ENCODE measurements at regions of chr12 and their contacts with region 1.

Region 1: DNA sequence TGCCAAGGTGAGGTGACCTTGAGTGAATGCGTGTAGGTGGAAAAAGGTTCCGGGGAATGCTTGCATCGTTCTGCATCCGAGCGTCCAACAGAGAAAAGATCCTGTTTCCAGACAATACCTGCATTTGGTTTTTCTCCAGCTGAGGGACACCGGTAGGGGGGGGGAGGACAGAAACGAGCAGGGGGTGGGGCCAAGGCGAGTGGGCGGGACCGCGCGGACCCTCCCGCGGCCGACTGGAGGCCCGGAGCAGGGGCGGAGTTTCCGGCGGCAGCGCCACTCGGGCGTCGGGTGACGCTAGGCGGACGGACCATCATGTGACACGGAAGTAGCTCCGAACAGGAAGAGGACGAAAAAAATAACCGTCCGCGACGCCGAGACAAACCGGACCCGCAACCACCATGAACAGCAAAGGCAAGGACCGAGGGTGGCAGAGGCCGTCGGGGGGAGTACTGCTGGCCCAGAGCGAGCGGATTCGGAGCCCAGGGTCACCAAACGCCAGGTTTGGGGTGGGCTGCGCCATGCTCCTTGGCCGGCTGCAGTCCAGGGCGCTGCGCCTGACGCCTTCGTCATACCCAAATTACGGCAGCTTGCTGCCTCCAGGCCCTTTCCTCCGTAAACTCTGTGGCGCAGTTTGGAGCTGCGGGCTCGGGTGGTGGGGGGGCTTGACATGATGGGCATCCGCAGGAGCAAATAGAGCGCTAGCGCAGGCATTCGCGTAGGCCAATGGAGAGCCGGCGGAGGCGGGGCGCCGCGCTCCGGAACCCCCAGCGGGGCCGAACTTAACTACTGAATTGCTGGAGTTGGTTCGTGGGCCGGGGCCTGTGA is at the start of gene DAZAP2:
- DNase-seq: peak; percentile 94
- ATAC-seq: peak; percentile 96
- H3K4me3 ChIP-seq: peak within 1 kb of the TSS; percentile 83
- H3K27ac ChIP-seq: peak within 1 kb of the TSS; percentile 96
- H3K4me1 ChIP-seq: peaks cover 8% of the 10 kb centered on the region
- H3K27me3 ChIP-seq: no peaks in the 10 kb centered on the region
- CTCF ChIP-seq: no peak
- POLR2A ChIP-seq: peak; percentile 95
- RAD21 ChIP-seq: no peak
- total RNA-seq, gene DAZAP2: 62.2 and 77.2 TPM in 2 replicates

Region 2: DNA sequence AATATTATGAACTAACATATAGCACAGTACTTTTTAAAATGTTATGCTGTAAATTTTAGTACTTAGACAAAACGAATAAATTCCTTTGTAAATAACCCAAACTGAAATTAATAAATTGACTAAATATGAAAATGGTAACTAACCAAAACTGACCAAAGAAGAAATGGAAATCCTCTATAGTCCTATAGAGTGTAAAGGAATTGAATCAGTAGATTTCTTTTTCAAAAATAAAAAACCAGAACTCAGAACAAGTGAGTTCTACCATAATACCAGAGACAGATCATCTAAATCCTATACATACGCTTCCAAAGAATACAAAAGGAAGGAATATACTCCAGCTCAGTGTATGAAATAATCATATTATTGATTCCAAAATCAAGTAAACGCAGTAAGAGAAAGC is 356.2 kb before region 1 on chr12:
- CTCF ChIA-PET with region 1: no interaction called
- POLR2A ChIA-PET with region 1: no interaction called
- dilution Hi-C with region 1: no loop called
- in situ Hi-C with region 1: no loop called
- intact Hi-C with region 1: no loop called
- DNase-seq: no peak
- ATAC-seq: no peak
- H3K4me3 ChIP-seq: no peak overlapping the region
- H3K27ac ChIP-seq: no peak overlapping the region
- H3K4me1 ChIP-seq: no peaks in the 10 kb centered on the region
- H3K27me3 ChIP-seq: no peaks in the 10 kb centered on the region
- CTCF ChIP-seq: no peak
- POLR2A ChIP-seq: no peak
- RAD21 ChIP-seq: no peak

Region 3: GRCh38 chr12:51083126-51083833 is 155.4 kb before region 1 on chr12 and contains the start of gene CSRNP2:
- CTCF ChIA-PET with region 1: no interaction called
- POLR2A ChIA-PET with region 1: interaction called, 4 read pairs
- dilution Hi-C with region 1: no loop called
- in situ Hi-C with region 1: no loop called
- intact Hi-C with region 1: loop called (anchors 5 kb)
- DNase-seq: peak; percentile 93
- ATAC-seq: peak; percentile 98
- H3K4me3 ChIP-seq: peak within 1 kb of the TSS; percentile 74
- H3K27ac ChIP-seq: peak within 1 kb of the TSS; percentile 66
- H3K4me1 ChIP-seq: peaks cover 2% of the 10 kb centered on the region; the same call in 1 of the 2 replicates
- H3K27me3 ChIP-seq: no peaks in the 10 kb centered on the region
- CTCF ChIP-seq: 0 out of 2 replicates have a peak, but pooled peaks have one; percentile 17
- POLR2A ChIP-seq: peak; percentile 100
- RAD21 ChIP-seq: no peak
- total RNA-seq, gene CSRNP2: 14.0 and 16.7 TPM in 2 replicates

Region 4: GRCh38 chr12:51318837-51319599 is 80.3 kb after region 1 on chr12:
- CTCF ChIA-PET with region 1: no interaction called
- POLR2A ChIA-PET with region 1: no interaction called
- dilution Hi-C with region 1: no loop called
- in situ Hi-C with region 1: no loop called
- intact Hi-C with region 1: no loop called
- DNase-seq: no peak
- ATAC-seq: no peak
- H3K4me3 ChIP-seq: no peak overlapping the region
- H3K27ac ChIP-seq: no peak overlapping the region
- H3K4me1 ChIP-seq: peaks cover 3% of the 10 kb centered on the region
- H3K27me3 ChIP-seq: no peaks in the 10 kb centered on the region
- CTCF ChIP-seq: no peak
- POLR2A ChIP-seq: no peak
- RAD21 ChIP-seq: no peak

Measured in IMR-90 (cell line).